ENCODE measurements at regions of chr11 and their contacts with region 1.

Region 1: DNA sequence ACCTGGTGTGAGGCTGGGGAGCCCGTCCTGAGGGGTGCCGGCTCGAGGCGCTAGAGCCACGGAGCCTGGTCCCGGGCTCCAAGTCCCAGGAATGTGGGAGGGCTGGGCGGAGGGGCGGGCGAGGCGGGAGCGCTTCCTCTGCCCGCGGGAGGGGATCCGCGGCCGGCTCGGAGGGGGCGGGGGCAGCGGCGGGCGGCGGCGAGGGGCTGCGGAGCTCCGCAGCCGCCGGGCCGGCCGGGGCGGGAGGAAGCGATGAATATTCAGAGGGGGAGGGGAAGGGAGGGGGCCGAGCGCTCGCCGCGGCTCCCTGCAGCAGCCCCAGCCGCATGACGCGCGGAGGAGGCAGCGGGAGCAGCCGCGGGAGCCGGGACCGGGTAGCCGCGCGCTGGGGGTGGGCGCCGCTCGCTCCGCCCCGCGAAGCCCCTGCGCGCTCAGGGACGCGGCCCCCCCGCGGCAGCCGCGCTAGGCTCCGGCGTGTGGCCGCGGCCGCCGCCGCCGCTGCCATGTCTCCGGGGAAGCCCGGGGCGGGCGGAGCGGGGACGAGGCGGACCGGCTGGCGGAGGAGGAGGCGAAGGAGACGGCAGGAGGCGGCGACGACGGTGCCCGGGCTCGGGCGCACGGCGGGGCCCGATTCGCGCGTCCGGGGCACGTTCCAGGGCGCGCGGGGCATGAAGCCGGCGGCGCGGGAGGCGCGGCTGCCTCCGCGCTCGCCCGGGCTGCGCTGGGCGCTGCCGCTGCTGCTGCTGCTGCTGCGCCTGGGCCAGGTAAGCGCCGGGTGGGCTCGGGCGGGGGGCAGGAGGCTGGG is at the start of gene PTPRJ:
- DNase-seq: peak; percentile 68 to 76 (median 72)
- H3K4me3 ChIP-seq: peak within 1 kb of the TSS in 1 of 2 donors; percentile 56
- H3K4me3 Mint-ChIP-seq: peak within 1 kb of the TSS; percentile 70 to 97 (median 93)
- H3K27ac ChIP-seq: peak within 1 kb of the TSS; percentile 53
- H3K27ac Mint-ChIP-seq: peak within 1 kb of the TSS; percentile 32 to 95 (median 53)
- H3K4me1 ChIP-seq: peaks cover 44% of the 10 kb centered on the region
- H3K4me1 Mint-ChIP-seq: peaks cover 28 to 40% (median 31%) of the 10 kb centered on the region in 4 donors
- H3K27me3 ChIP-seq: no peaks in the 10 kb centered on the region
- H3K27me3 Mint-ChIP-seq: no peaks in the 10 kb centered on the region
- total RNA-seq, gene PTPRJ: 57.8 to 57.9 TPM

Region 2: GRCh38 chr11:46916286-46917108 is 1064.0 kb before region 1 on chr11:
- CTCF ChIA-PET with region 1: no interaction called
- POLR2A ChIA-PET with region 1: no interaction called
- intact Hi-C with region 1: no loop called
- DNase-seq: peak in 1 of 5 donors; percentile 10
- H3K4me3 ChIP-seq: peak overlapping the region; percentile 14 to 56
- H3K4me3 Mint-ChIP-seq: peak overlapping the region; percentile 73 to 91 (median 82)
- H3K27ac ChIP-seq: no peak overlapping the region
- H3K27ac Mint-ChIP-seq: peak overlapping the region in 3 of 7 donors; percentile 48 to 70 (median 60)
- H3K4me1 ChIP-seq: peaks cover 25% of the 10 kb centered on the region
- H3K4me1 Mint-ChIP-seq: peaks cover 16 to 37% (median 28%) of the 10 kb centered on the region in 4 donors
- H3K27me3 ChIP-seq: peaks cover 54% of the 10 kb centered on the region
- H3K27me3 Mint-ChIP-seq: peaks cover 58 to 66% of the 10 kb centered on the region in 2 donors

Region 3: GRCh38 chr11:47991266-47991830 is 10.9 kb after region 1 on chr11:
- CTCF ChIA-PET with region 1: interaction called, 9 read pairs
- POLR2A ChIA-PET with region 1: interaction called, 10 read pairs
- intact Hi-C with region 1: no loop called
- DNase-seq: peak in 2 of 5 donors; percentile 23 to 39
- H3K4me3 ChIP-seq: peak overlapping the region in 1 of 2 donors; percentile 10
- H3K4me3 Mint-ChIP-seq: peak overlapping the region; percentile 61 to 87 (median 76)
- H3K27ac ChIP-seq: peak overlapping the region; percentile 46
- H3K27ac Mint-ChIP-seq: peak overlapping the region; percentile 49 to 92 (median 84)
- H3K4me1 ChIP-seq: peaks cover 53% of the 10 kb centered on the region
- H3K4me1 Mint-ChIP-seq: peaks cover 34 to 65% (median 43%) of the 10 kb centered on the region in 4 donors
- H3K27me3 ChIP-seq: no peaks in the 10 kb centered on the region
- H3K27me3 Mint-ChIP-seq: no peaks in the 10 kb centered on the region

Region 4: DNA sequence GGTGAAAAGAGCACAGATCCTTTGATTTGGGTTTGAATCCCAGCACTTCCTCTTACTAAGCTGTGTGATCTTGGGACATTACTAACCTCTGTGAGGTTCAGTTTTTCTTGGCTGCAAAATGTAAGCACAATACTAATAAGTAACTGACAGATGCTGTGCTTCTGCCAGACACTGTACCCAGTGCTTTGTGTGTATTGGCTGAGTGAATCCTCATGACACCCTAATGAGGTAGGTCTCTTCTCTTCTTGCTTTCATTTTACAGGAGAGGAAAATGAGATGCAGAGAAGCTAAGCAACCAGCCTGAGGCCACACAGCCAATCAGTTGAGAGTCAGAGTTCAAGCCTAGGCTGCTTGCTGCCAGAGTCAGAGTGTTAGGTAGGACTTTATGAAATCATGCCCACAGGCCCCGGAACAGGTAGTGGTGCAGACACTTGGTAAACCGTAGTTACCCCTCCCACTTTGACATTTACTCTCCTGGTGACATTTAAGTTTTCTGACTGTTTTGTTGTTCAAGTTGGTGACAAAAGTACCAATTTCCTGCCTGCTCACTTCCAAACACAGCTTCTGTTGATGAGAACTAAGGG is 21.1 kb after region 1 on chr11:
- CTCF ChIA-PET with region 1: interaction called, 13 read pairs
- POLR2A ChIA-PET with region 1: interaction called, 64 read pairs
- intact Hi-C with region 1: loop called (anchors 1 kb)
- DNase-seq: peak; percentile 90 to 97 (median 95)
- H3K4me3 ChIP-seq: peak overlapping the region in 1 of 2 donors; percentile 14
- H3K4me3 Mint-ChIP-seq: peak overlapping the region; percentile 66 to 93 (median 76)
- H3K27ac ChIP-seq: peak overlapping the region; percentile 65
- H3K27ac Mint-ChIP-seq: peak overlapping the region; percentile 90 to 99 (median 97)
- H3K4me1 ChIP-seq: peaks cover 95% of the 10 kb centered on the region
- H3K4me1 Mint-ChIP-seq: peaks cover 61 to 93% (median 80%) of the 10 kb centered on the region in 4 donors
- H3K27me3 ChIP-seq: no peaks in the 10 kb centered on the region
- H3K27me3 Mint-ChIP-seq: no peaks in the 10 kb centered on the region

Region 5: GRCh38 chr11:48013269-48013901 is 32.9 kb after region 1 on chr11:
- CTCF ChIA-PET with region 1: interaction called, 5 read pairs
- POLR2A ChIA-PET with region 1: interaction called, 24 read pairs
- intact Hi-C with region 1: no loop called
- DNase-seq: peak; percentile 47 to 83 (median 54)
- H3K4me3 ChIP-seq: peak overlapping the region in 1 of 2 donors; percentile 44
- H3K4me3 Mint-ChIP-seq: peak overlapping the region in 7 of 8 donors; percentile 67 to 83 (median 77)
- H3K27ac ChIP-seq: peak overlapping the region; percentile 76
- H3K27ac Mint-ChIP-seq: peak overlapping the region; percentile 84 to 98 (median 97)
- H3K4me1 ChIP-seq: peaks cover 93% of the 10 kb centered on the region
- H3K4me1 Mint-ChIP-seq: peaks cover 66 to 91% (median 83%) of the 10 kb centered on the region in 4 donors
- H3K27me3 ChIP-seq: no peaks in the 10 kb centered on the region
- H3K27me3 Mint-ChIP-seq: no peaks in the 10 kb centered on the region

Region 6: GRCh38 chr11:48020092-48020755 is 39.8 kb after region 1 on chr11:
- CTCF ChIA-PET with region 1: interaction called, 5 read pairs
- POLR2A ChIA-PET with region 1: interaction called, 24 read pairs
- intact Hi-C with region 1: loop called (anchors 2 kb)
- DNase-seq: peak; percentile 58 to 74 (median 59)
- H3K4me3 ChIP-seq: peak overlapping the region in 1 of 2 donors; percentile 17
- H3K4me3 Mint-ChIP-seq: peak overlapping the region; percentile 21 to 85 (median 70)
- H3K27ac ChIP-seq: peak overlapping the region; percentile 59
- H3K27ac Mint-ChIP-seq: peak overlapping the region; percentile 75 to 93 (median 84)
- H3K4me1 ChIP-seq: peaks cover 62% of the 10 kb centered on the region
- H3K4me1 Mint-ChIP-seq: peaks cover 54 to 77% (median 65%) of the 10 kb centered on the region in 4 donors
- H3K27me3 ChIP-seq: no peaks in the 10 kb centered on the region
- H3K27me3 Mint-ChIP-seq: no peaks in the 10 kb centered on the region

Region 7: GRCh38 chr11:48307760-48308386 is 327.4 kb after region 1 on chr11:
- CTCF ChIA-PET with region 1: no interaction called
- POLR2A ChIA-PET with region 1: no interaction called
- intact Hi-C with region 1: no loop called
- DNase-seq: peak; percentile 52 to 59 (median 56)
- H3K4me3 ChIP-seq: no peak overlapping the region
- H3K4me3 Mint-ChIP-seq: no peak overlapping the region
- H3K27ac ChIP-seq: no peak overlapping the region
- H3K27ac Mint-ChIP-seq: no peak overlapping the region
- H3K4me1 ChIP-seq: no peaks in the 10 kb centered on the region
- H3K4me1 Mint-ChIP-seq: peaks cover 0 to 6% (median 4%) of the 10 kb centered on the region in 4 donors
- H3K27me3 ChIP-seq: no peaks in the 10 kb centered on the region
- H3K27me3 Mint-ChIP-seq: peaks cover 6 to 10% of the 10 kb centered on the region in 2 donors